ENCODE measurements at regions of chr4 and their contacts with region 1.

Region 1: DNA sequence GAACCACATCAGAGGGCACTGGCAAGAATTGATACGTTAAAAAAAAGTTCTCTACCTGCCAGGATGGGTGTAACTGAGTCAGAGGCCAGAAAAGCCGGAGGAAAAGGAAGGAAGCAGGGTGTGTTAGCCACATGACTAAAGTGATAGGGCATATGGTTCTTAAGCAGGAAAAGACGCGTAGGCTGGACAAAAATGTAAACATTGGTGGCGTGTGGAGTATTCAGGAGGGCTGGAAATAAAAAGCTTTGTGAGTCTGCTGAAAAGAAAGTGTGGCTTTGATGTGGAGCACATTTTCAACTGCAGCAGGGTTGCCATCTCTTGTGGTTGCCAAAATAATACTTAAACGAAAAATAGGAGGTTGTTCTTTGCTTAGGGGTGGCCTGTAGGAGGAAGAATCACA is 186.5 kb upstream of the RPL34 start:
- DNase-seq: peak; percentile 57
- H3K4me3 Mint-ChIP-seq: peak overlapping the region; percentile 32
- H3K27ac Mint-ChIP-seq: peak overlapping the region; percentile 70
- H3K4me1 Mint-ChIP-seq: peaks cover 44% of the 10 kb centered on the region
- H3K27me3 Mint-ChIP-seq: no peaks in the 10 kb centered on the region

Region 2: DNA sequence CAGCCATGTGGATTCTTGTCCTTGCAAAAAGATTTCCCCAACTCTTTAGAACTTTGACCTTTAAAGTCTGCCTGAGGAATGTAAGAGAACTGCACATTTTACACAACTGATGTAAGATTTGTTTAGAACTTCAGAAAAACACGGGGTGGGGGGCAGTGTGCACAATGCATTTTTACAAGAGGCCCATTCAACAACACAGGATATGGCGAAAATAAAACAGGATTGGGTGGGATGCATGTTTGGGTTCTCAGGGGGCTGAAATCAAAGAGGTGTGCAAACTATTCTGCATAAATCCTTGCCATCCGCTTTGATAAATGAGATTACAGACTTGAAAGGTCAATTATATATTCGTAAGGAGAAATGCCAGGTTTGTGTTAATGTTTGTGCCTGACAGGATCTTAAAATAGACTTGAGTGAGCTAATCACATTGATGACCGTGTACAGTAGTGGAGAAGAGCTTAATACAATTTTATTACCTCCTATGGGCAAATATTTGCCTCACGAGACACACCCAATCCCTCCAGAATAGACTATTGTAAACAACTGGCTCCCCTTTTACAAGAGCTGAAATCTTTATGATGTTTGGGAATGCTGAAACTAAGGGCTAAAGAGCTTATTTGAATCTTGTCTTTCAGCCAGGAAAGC is 81.0 kb before region 1 on chr4:
- CTCF ChIA-PET with region 1: no interaction called
- intact Hi-C with region 1: no loop called
- DNase-seq: no peak
- H3K4me3 Mint-ChIP-seq: no peak overlapping the region
- H3K27ac Mint-ChIP-seq: no peak overlapping the region
- H3K4me1 Mint-ChIP-seq: peaks cover 43% of the 10 kb centered on the region
- H3K27me3 Mint-ChIP-seq: no peaks in the 10 kb centered on the region

Region 3: DNA sequence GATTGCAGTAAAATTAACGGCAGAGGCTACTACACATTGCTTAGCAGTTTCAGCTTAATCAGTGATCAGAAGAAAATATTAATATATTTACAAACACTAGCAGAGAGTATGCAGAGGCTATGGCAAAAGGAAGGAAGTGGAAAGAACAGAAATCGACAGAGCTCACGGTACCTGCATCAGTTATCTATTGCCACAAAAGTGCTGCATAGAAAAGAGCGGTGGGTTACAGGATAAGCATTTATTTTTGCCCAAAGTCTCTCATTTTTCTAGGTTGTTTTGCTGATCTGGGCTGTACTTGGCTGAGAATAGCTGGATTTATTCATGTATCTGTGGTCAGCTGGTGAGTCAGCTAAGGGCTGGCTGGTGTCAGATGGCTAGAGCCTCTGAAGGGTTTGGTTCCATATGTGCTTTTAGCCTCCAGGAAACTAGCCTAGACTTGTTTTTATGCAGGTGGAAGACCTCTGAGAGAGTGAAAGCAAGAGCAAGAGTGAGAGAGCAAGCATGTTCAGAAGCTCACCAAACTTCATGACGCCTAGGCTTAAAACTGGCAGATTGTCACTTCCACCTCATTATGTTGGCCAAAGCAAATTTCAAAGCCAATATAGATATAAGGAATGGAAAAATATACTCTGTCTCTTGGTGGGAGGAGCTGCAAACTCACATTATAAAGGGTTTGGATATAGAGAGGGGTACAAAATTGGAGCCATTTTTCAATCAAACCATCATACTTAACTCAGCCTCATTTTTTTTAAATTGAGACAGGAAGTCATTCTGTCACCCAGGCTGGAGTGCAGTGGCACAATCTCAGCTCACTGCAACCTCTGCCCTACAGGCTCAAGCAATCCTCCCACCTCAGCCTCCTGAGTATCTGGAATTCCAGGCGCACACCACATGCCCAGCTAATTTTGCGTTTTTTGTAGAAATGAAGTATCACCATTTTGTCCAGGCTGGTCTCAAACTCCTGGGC is 33.4 kb after region 1 on chr4:
- CTCF ChIA-PET with region 1: no interaction called
- intact Hi-C with region 1: loop called (anchors 1 kb)
- DNase-seq: peak; percentile 48
- H3K4me3 Mint-ChIP-seq: peak overlapping the region; percentile 65
- H3K27ac Mint-ChIP-seq: peak overlapping the region; percentile 88
- H3K4me1 Mint-ChIP-seq: peaks cover 40% of the 10 kb centered on the region
- H3K27me3 Mint-ChIP-seq: no peaks in the 10 kb centered on the region

Measured in activated naive CD4-positive, alpha-beta T cell treated with anti-CD3 and anti-CD28 coated beads for 36 hours (primary cell).